Psoas muscle (tissue), 8 donors: ENCODE measurements at regions of chr7 and their contacts with region 1.

Region 1: DNA sequence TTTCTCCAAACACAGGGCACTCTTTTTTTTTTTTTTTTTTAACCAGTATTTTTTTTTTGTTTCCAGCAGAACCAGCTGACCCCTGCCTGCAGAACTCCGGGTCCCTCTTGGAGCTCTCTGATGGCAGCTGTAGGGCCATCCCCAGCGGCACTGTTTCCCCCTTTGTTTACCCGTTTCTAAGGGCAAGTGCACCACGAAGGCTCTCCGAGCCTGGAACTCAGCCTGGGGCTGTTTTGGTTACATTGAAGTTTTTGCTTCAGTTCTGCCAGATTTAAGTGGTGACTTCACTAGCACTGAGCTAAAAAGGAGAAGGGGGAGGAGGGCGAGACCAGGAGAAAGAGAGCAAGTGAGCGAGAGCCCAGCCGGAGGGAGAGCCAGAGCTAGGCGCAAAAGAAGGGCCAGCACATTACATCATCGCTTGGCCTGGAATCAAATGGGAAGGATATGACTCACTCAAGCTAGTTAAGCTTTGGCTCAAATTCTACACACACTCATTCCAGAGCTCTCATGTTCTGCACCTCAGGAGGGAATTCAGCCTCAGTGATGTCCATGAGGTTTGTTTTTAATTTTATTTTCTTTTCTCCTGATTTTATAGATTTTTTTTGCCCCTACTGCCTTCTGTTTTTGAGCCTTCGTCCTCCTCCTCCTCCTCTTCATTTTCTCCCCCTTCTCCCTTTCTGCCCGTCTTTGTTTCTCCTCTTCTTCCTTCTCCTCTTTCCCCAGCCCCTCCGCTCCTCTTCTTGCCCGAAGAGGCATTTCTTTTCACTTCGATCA is 272.3 kb downstream of the TRIL start:
- DNase-seq: peak; percentile 86 to 91
- ATAC-seq: peak; percentile 86 to 91 (median 88)
- H3K4me3 ChIP-seq: peak overlapping the region; percentile 67
- H3K27ac ChIP-seq: peak overlapping the region; percentile 85
- H3K4me1 ChIP-seq: peaks cover 38% of the 10 kb centered on the region
- H3K27me3 ChIP-seq: no peaks in the 10 kb centered on the region
- CTCF ChIP-seq: no peak

Region 2: DNA sequence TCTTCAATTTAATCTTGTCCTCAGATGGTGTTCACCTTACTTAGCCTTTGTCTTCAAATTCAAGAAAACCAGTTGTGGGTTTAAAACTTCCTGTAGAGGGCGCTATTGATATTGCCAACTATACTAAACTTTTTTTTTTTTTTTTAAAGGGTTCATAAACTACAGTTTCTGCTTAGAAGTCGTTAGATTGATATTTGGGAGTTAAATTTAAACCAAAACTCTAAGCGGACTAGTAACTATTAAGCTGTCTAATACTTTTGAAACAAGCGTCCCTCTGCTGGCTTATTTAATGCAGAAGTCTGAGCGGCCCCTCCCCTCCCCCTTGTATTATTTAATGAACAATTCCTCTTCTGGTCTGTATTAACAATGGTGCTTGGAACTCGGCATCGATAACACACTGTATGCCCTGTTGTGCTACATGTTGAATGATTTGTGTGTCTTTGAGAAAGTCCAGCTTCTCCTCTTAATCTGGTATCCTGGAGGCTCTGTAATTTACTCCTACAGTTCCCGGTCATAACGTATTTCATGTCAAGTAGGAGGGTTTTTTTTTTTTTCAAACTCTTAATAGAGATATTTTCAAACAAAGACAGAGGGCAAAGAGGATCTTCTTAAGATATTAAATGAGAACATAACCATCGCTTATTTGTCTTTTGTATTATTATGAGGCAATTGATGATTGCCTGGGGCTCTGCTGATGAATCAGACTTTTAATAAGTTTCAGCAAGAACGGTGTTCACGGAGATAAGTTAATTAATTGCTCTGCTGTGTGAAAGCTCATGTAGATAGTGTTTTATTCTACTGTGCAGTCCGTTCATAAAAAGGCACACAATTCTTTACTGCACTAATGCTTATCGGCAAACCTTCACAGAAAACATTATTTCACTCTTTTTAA is 296.1 kb before region 1 on chr7:
- intact Hi-C with region 1: loop called in 1 of 2 experiments (anchors 5 kb)
- DNase-seq: no peak
- ATAC-seq: peak in 3 of 4 donors; percentile 37 to 82 (median 66)
- H3K4me3 ChIP-seq: peak overlapping the region; percentile 56
- H3K27ac ChIP-seq: no peak overlapping the region
- H3K4me1 ChIP-seq: no peaks in the 10 kb centered on the region
- H3K27me3 ChIP-seq: no peaks in the 10 kb centered on the region
- CTCF ChIP-seq: peak; percentile 89

Region 3: GRCh38 chr7:28408960-28409715 is 276.7 kb before region 1 on chr7:
- intact Hi-C with region 1: loop called (anchors 2 to 5 kb)
- DNase-seq: peak; percentile 96 to 97
- ATAC-seq: peak; percentile 83 to 90 (median 88)
- H3K4me3 ChIP-seq: peak overlapping the region; percentile 84
- H3K27ac ChIP-seq: peak overlapping the region; percentile 95
- H3K4me1 ChIP-seq: peaks cover 14% of the 10 kb centered on the region
- H3K27me3 ChIP-seq: no peaks in the 10 kb centered on the region
- CTCF ChIP-seq: no peak

Region 4: GRCh38 chr7:28626624-28627262 is 59.1 kb before region 1 on chr7:
- intact Hi-C with region 1: loop called in 1 of 2 experiments (anchors 5 kb)
- DNase-seq: no peak
- ATAC-seq: no peak
- H3K4me3 ChIP-seq: no peak overlapping the region
- H3K27ac ChIP-seq: peak overlapping the region; percentile 48
- H3K4me1 ChIP-seq: peaks cover 49% of the 10 kb centered on the region
- H3K27me3 ChIP-seq: no peaks in the 10 kb centered on the region
- CTCF ChIP-seq: peak; percentile 66

Region 5: GRCh38 chr7:28638914-28639313 is 46.9 kb before region 1 on chr7:
- intact Hi-C with region 1: loop called in 1 of 2 experiments (anchors 5 kb)
- DNase-seq: no peak
- ATAC-seq: no peak
- H3K4me3 ChIP-seq: no peak overlapping the region
- H3K27ac ChIP-seq: no peak overlapping the region
- H3K4me1 ChIP-seq: no peaks in the 10 kb centered on the region
- H3K27me3 ChIP-seq: no peaks in the 10 kb centered on the region
- CTCF ChIP-seq: no peak

Region 6: GRCh38 chr7:28853834-28854749 is 168.3 kb after region 1 on chr7:
- intact Hi-C with region 1: loop called in 1 of 2 experiments (anchors 5 kb)
- DNase-seq: peak; percentile 77 to 91
- ATAC-seq: peak; percentile 97 to 100 (median 100)
- H3K4me3 ChIP-seq: peak overlapping the region; percentile 71
- H3K27ac ChIP-seq: no peak overlapping the region
- H3K4me1 ChIP-seq: peaks cover 3% of the 10 kb centered on the region
- H3K27me3 ChIP-seq: peaks cover 0 to 2% (median 0%) of the 10 kb centered on the region in 3 donors
- CTCF ChIP-seq: peak; percentile 92